HEK293 (cell line): ENCODE measurements at regions of chr2 and their contacts with region 1.

Region 1: DNA sequence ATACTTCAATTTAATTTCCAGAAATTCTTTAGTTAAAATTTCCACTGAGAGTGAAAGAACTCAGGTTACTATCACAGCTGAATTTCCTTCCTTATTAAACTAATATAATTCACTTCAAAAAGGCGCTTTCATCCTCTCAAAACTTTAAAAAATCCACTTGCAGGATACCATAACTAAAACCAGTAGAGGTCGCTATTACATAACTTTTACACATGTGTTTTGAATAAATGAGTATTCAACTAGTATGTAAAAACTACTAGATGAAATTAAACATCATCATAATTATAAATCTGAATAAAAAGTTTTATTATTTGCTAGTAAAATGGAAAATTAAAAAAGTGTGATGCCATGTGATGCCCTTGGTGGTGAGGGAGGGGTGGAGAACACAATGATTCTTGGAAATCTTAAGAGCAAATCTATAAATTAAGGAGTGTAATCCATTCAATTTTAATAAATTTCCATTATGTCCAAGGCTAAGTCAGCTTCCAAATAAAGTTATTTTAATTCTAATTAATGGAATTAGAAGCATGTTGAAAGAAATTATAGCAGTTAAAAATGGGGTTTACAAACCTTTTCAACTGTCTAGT is 61.4 kb downstream of the SOS1 start:
- H3K4me3 ChIP-seq: no peak overlapping the region
- H3K27ac ChIP-seq: no peak overlapping the region
- H3K4me1 ChIP-seq: peaks cover 2% of the 10 kb centered on the region
- CTCF ChIP-seq: 0 out of 2 replicates have a peak, but pooled peaks have one; percentile 36

Region 2: DNA sequence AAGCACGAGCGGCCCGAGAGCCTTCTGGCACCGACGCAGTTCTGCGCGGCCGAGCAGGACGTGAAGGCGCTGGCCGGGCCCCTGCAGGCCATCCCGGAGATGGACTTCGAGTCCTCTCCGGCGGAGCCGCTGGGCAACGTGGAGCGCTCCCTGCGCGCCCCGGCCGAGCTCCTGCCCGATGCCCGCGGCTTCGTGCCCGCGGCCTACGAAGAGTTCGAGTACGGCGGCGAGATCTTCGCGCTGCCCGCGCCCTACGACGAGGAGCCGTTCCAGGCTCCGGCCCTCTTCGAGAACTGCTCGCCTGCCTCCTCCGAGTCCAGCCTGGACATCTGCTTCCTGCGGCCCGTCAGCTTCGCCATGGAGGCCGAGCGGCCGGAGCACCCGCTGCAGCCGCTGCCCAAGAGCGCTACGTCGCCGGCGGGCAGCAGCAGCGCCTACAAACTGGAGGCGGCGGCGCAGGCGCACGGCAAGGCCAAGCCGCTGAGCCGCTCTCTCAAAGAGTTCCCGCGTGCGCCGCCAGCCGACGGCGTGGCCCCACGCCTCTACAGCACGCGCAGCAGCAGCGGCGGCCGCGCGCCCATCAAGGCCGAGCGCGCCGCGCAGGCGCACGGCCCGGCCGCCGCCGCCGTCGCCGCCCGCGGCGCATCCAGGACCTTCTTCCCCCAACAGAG is 99.4 kb before region 1 on chr2:
- CTCF ChIA-PET with region 1: no interaction called
- POLR2A ChIA-PET with region 1: no interaction called
- H3K4me3 ChIP-seq: no peak overlapping the region
- H3K27ac ChIP-seq: no peak overlapping the region
- H3K4me1 ChIP-seq: no peaks in the 10 kb centered on the region
- CTCF ChIP-seq: no peak

Region 3: DNA sequence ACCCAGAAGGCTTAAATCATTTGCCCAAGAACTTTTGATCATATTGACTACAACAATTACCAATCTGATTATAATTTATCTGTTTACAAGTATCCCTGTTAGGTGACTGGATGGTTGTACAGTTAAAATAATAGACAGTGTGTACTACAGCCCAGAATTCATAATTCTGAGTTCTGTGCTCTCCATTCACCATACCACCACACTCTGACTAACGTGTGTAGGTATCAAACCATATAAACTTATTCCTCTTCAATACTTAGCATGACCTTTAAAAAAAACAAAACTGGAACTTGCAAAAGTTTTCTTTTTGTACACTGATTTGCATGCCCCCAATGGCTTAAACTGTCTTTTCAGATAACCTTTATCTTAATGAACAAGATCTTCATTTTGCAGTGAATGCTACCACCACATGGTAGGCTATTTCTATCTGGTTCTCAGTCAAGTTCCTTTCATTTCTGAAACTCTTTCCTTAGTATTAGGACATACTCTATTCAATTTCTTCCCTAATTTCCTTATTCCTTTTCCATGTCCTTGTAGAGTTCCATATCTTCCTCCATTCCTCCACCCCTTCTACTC is 10.5 kb after region 1 on chr2:
- CTCF ChIA-PET with region 1: no interaction called
- POLR2A ChIA-PET with region 1: no interaction called
- H3K4me3 ChIP-seq: no peak overlapping the region
- H3K27ac ChIP-seq: no peak overlapping the region
- H3K4me1 ChIP-seq: peaks cover 15% of the 10 kb centered on the region
- CTCF ChIP-seq: no peak

Region 4: DNA sequence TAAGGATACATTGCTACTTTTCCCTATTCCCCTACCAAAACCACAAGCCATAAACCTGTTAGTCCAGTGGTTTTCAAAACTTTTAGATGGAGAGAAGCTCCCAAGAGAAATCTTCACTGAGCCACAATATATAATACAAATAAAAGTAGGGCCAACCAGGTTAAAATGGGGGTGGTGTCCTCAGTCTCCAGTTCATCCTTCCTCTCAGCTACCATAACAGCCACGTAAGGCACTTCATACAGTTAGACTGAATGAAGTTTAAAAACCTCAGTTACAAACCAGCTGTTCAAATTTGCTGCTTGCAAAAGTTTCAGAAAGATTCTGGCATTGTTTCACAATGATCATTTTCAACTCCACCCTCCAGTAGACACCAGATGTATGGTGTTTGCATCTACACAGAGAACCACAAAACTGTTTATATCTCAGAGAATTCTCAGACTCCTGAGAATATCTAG is 35.4 kb after region 1 on chr2:
- CTCF ChIA-PET with region 1: interaction called, 13 read pairs
- POLR2A ChIA-PET with region 1: no interaction called
- H3K4me3 ChIP-seq: no peak overlapping the region
- H3K27ac ChIP-seq: no peak overlapping the region; the same call in 1 of the 2 replicates
- H3K4me1 ChIP-seq: peaks cover 8% of the 10 kb centered on the region; the same call in 1 of the 2 replicates
- CTCF ChIP-seq: no peak

Region 5: DNA sequence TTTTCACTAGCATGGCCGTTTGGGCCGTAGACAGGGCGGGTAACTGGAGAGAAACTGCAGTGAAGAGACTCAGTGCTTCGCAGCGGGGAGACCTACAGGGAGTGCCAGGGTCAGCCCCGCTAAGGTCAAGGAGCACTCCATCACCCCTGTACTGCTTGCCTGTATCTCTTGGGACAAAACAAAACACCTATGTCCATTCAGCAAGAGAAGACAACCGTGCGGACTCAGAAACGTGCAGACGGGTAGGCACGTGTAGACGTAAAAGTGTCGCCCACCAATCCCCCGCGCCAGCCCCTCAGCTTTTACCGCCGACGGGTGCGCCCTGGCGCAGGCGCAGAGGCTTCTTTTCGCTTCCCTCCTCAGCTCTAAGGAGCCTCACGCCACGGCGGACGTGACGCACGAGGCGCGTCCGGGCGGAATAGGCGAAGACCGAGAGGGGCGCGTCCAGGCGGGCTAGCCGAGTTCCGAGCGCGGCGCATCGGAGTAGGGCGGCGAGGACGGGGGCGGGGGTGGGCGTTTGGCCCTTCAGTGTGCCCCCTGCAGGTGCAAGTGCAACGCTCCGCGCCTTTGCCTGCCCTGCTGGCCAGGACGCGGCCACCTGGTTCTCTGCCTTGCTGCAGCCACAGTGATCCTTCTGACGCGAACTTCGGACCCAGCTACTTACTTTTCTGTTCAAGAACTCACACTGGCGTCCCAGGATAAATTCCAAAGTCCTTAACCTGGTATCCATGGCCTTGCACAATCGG is 64.7 kb after region 1 on chr2:
- CTCF ChIA-PET with region 1: interaction called, 14 read pairs
- POLR2A ChIA-PET with region 1: interaction called, 4 read pairs
- H3K4me3 ChIP-seq: peak overlapping the region; percentile 78
- H3K27ac ChIP-seq: peak overlapping the region; percentile 61
- H3K4me1 ChIP-seq: peaks cover 8% of the 10 kb centered on the region
- CTCF ChIP-seq: peak; percentile 91